ENCODE measurements at regions of chr20 and their contacts with region 1.

Region 1: GRCh38 chr20:33621717-33622400 is 40.3 kb upstream of the C20orf144 start:
- DNase-seq: peak; percentile 19
- H3K4me3 ChIP-seq: no peak overlapping the region
- H3K27ac ChIP-seq: no peak overlapping the region
- H3K4me1 ChIP-seq: peaks cover 5% of the 10 kb centered on the region
- H3K27me3 ChIP-seq: no peaks in the 10 kb centered on the region
- CTCF ChIP-seq: no peak

Region 2: DNA sequence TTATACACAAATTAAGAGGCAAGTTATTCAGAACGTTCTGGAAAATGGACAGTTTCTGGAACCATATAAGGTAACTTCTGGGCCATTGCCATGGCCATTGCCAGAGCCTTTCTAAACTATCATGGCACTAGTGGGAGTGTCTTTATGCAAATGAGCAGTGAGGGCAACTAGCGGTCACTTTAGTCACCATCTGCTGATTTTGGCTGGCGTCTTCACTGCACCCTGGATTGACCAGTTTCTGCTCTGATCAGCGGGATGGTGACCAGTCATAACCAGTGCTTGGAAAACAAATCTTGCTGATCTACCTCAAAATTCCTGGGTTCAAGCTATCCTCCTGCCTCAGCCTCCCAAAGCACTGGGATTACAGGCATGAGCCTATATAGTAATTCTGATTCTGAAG is 171.0 kb before region 1 on chr20:
- CTCF ChIA-PET with region 1: interaction called, 13 read pairs
- POLR2A ChIA-PET with region 1: no interaction called
- intact Hi-C with region 1: no loop called
- DNase-seq: no peak
- H3K4me3 ChIP-seq: no peak overlapping the region
- H3K27ac ChIP-seq: no peak overlapping the region
- H3K4me1 ChIP-seq: no peaks in the 10 kb centered on the region
- H3K27me3 ChIP-seq: no peaks in the 10 kb centered on the region
- CTCF ChIP-seq: no peak

Region 3: GRCh38 chr20:33561692-33562601 is 59.9 kb before region 1 on chr20:
- CTCF ChIA-PET with region 1: no interaction called
- POLR2A ChIA-PET with region 1: no interaction called
- intact Hi-C with region 1: no loop called
- DNase-seq: peak; percentile 75
- H3K4me3 ChIP-seq: no peak overlapping the region
- H3K27ac ChIP-seq: peak overlapping the region; percentile 6
- H3K4me1 ChIP-seq: peaks cover 13% of the 10 kb centered on the region
- H3K27me3 ChIP-seq: no peaks in the 10 kb centered on the region
- CTCF ChIP-seq: no peak